ENCODE measurements at regions of chr5 and their contacts with region 1.

Region 1: GRCh38 chr5:60668686-60669304 is 31.2 kb downstream of the DEPDC1B start:
- DNase-seq: peak; percentile 42
- H3K4me3 ChIP-seq: no peak overlapping the region
- H3K27ac ChIP-seq: no peak overlapping the region
- H3K4me1 ChIP-seq: no peaks in the 10 kb centered on the region
- H3K27me3 ChIP-seq: no peaks in the 10 kb centered on the region
- CTCF ChIP-seq: peak; percentile 24 to 39
- POLR2A ChIP-seq: no peak

Region 2: GRCh38 chr5:60295423-60295822 is 373.4 kb before region 1 on chr5:
- CTCF ChIA-PET with region 1: interaction called, 10 read pairs
- POLR2A ChIA-PET with region 1: no interaction called
- dilution Hi-C with region 1: no loop called
- intact Hi-C with region 1: no loop called
- DNase-seq: peak; percentile 16
- H3K4me3 ChIP-seq: no peak overlapping the region
- H3K27ac ChIP-seq: no peak overlapping the region
- H3K4me1 ChIP-seq: no peaks in the 10 kb centered on the region
- H3K27me3 ChIP-seq: no peaks in the 10 kb centered on the region
- CTCF ChIP-seq: peak in 1 of 2 donors; percentile 43
- POLR2A ChIP-seq: no peak

Region 3: DNA sequence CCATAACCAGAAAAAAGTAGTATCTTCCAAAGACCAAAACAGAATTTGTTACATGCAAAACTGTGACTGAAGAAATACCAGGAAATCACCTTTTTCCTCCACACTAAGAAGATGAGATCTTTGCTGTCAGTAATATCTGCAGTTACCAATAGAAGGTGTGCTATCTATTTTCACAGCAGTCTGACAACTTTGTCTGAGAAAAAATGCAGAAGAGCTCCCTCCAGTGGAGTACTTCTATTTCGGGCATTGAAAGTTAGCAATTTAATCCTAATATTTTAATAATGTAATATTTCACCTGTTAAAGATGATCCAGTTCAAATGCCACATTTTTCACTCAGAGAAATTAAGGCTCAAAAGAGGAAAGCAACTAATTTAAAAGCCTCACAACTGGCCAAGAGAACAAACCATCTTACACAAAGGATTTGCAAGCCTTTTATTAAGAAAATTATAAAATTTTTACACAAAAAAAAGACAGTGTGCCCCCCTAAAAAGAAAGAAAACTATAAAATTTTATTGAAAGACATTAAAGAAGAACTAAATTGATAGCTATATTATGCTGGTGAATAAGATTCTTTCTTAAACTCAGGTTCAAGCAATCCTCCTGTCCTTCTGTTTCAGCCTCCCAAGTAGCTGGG is 19.4 kb before region 1 on chr5:
- CTCF ChIA-PET with region 1: interaction called, 20 read pairs
- POLR2A ChIA-PET with region 1: no interaction called
- dilution Hi-C with region 1: no loop called
- intact Hi-C with region 1: no loop called
- DNase-seq: peak; percentile 48
- H3K4me3 ChIP-seq: no peak overlapping the region
- H3K27ac ChIP-seq: no peak overlapping the region
- H3K4me1 ChIP-seq: no peaks in the 10 kb centered on the region
- H3K27me3 ChIP-seq: no peaks in the 10 kb centered on the region
- CTCF ChIP-seq: peak; percentile 50 to 51
- POLR2A ChIP-seq: no peak

Region 4: GRCh38 chr5:60687927-60688720 is 19.3 kb after region 1 on chr5:
- CTCF ChIA-PET with region 1: interaction called, 14 read pairs
- POLR2A ChIA-PET with region 1: no interaction called
- dilution Hi-C with region 1: no loop called
- intact Hi-C with region 1: no loop called
- DNase-seq: peak; percentile 32
- H3K4me3 ChIP-seq: no peak overlapping the region
- H3K27ac ChIP-seq: no peak overlapping the region
- H3K4me1 ChIP-seq: no peaks in the 10 kb centered on the region
- H3K27me3 ChIP-seq: no peaks in the 10 kb centered on the region
- CTCF ChIP-seq: peak; percentile 28 to 57
- POLR2A ChIP-seq: no peak

Region 5: GRCh38 chr5:60699530-60700382 is 31.0 kb after region 1 on chr5 and contains the start of gene DEPDC1B:
- CTCF ChIA-PET with region 1: interaction called, 33 read pairs
- POLR2A ChIA-PET with region 1: no interaction called
- dilution Hi-C with region 1: no loop called
- intact Hi-C with region 1: no loop called
- DNase-seq: peak; percentile 92
- H3K4me3 ChIP-seq: peak within 1 kb of the TSS; percentile 53 to 87 (median 70)
- H3K27ac ChIP-seq: peak within 1 kb of the TSS; percentile 54
- H3K4me1 ChIP-seq: peaks cover 15% of the 10 kb centered on the region
- H3K27me3 ChIP-seq: peaks cover 3 to 5% of the 10 kb centered on the region in 2 experiments
- CTCF ChIP-seq: peak; percentile 42 to 60
- POLR2A ChIP-seq: peak; percentile 64
- total RNA-seq, gene DEPDC1B: 14.2 and 18.7 TPM in 2 replicates

Region 6: GRCh38 chr5:60978968-60979367 is 310.2 kb after region 1 on chr5:
- CTCF ChIA-PET with region 1: no interaction called
- POLR2A ChIA-PET with region 1: no interaction called
- dilution Hi-C with region 1: no loop called
- intact Hi-C with region 1: no loop called
- DNase-seq: no peak
- H3K4me3 ChIP-seq: no peak overlapping the region
- H3K27ac ChIP-seq: no peak overlapping the region
- H3K4me1 ChIP-seq: no peaks in the 10 kb centered on the region
- H3K27me3 ChIP-seq: no peaks in the 10 kb centered on the region
- CTCF ChIP-seq: no peak
- POLR2A ChIP-seq: no peak

Region 7: GRCh38 chr5:61055434-61056006 is 386.7 kb after region 1 on chr5:
- CTCF ChIA-PET with region 1: no interaction called
- POLR2A ChIA-PET with region 1: no interaction called
- dilution Hi-C with region 1: no loop called
- intact Hi-C with region 1: no loop called
- DNase-seq: peak; percentile 66
- H3K4me3 ChIP-seq: no peak overlapping the region
- H3K27ac ChIP-seq: no peak overlapping the region
- H3K4me1 ChIP-seq: peaks cover 13% of the 10 kb centered on the region
- H3K27me3 ChIP-seq: no peaks in the 10 kb centered on the region
- CTCF ChIP-seq: peak; percentile 50 to 54
- POLR2A ChIP-seq: no peak

Region 8: GRCh38 chr5:61933787-61934626 is 1265.2 kb after region 1 on chr5:
- CTCF ChIA-PET with region 1: no interaction called
- POLR2A ChIA-PET with region 1: no interaction called
- dilution Hi-C with region 1: no loop called
- intact Hi-C with region 1: loop called (anchors 2 kb)
- DNase-seq: peak; percentile 55
- H3K4me3 ChIP-seq: no peak overlapping the region
- H3K27ac ChIP-seq: no peak overlapping the region
- H3K4me1 ChIP-seq: no peaks in the 10 kb centered on the region
- H3K27me3 ChIP-seq: no peaks in the 10 kb centered on the region
- CTCF ChIP-seq: peak; percentile 29 to 52
- POLR2A ChIP-seq: no peak

Measured in endothelial cell of umbilical vein (primary cell).